A549 (cell line): ENCODE measurements at regions of chr16 and their contacts with region 1.

Region 1: DNA sequence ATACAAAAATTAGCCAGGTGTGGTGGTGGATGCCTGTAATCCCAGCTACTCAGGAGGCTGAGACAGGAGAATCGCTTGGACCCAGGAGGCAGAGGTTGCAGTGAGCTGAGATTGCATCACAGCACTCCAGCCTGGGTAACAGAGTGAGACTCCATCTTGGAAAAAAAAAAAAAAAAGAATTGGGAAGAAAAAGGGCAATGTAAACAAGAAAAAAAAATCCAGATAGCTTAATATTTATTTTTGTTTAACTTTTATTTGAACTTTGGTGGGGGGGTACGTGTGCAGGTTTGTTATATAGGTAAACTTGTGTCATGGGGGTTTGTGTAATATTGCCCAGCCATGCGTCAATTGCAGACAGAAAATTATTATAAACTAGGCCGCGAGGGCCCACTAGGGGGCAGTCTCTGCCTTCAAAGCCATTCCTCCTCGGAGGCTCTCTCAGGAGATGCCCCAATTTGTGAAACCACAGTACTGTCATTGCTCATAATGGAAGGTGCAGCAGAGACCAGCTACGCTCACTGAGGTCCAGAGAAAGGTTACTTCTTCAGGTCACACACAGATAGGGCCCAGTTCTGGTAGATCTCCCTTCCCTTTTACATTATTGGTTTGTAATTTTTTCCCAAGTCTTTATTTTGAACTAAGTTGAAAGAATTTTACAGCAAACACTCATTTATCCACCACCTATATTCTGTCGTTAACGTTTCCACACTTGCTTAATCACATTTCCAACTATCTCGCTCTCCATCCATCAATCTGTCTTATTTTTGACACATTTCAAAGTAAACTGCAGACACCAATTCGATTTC is 206.2 kb downstream of the PRKCB start:
- DNase-seq: peak; percentile 65 to 69
- ATAC-seq: peak; percentile 76 to 89; a peak in 5 of 6 replicates
- H3K4me3 ChIP-seq: no peak overlapping the region
- H3K27ac ChIP-seq: no peak overlapping the region
- H3K4me1 ChIP-seq: no peaks in the 10 kb centered on the region
- CTCF ChIP-seq: peak; percentile 79
- EP300 ChIP-seq: no peak
- POLR2A ChIP-seq: no peak
- RAD21 ChIP-seq: peak; percentile 78 to 89

Region 2: DNA sequence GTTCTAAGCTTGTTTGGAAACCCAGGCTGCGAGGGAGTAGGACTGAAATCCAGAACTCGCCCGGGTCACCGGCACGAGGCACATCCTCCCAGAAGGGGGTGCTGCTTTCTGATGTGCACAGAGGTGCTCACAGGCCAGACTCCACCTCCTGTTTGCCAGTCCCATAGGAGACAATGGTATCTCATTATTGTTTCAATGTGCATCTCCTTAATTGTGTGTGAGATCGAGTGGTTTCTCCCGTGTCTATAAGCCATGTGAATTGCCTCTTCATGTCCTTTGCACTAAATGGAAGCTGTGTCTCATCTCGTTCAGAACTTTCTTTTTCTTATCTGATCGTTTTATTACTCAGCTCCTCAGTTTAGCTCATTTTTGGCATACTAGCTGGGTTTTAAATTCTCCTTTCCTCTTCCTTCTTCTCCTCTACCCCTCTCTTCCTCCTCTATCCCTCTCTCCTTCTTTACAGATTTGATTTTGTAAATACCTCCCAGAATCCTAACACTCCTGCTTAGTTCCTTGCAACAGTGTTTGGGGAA is 238.4 kb before region 1 on chr16:
- CTCF ChIA-PET with region 1: interaction called, 116 read pairs
- POLR2A ChIA-PET with region 1: no interaction called
- DNase-seq: peak; percentile 55 to 60
- ATAC-seq: peak; percentile 91 to 95
- H3K4me3 ChIP-seq: no peak overlapping the region
- H3K27ac ChIP-seq: no peak overlapping the region
- H3K4me1 ChIP-seq: 0 out of 3 replicates have a peak, but pooled peaks cover 5% of the 10 kb centered on the region
- CTCF ChIP-seq: peak; percentile 52
- EP300 ChIP-seq: no peak
- POLR2A ChIP-seq: no peak
- RAD21 ChIP-seq: peak; percentile 55 to 62

Region 3: GRCh38 chr16:24054741-24055491 is 12.9 kb after region 1 on chr16:
- CTCF ChIA-PET with region 1: interaction called, 20 read pairs
- POLR2A ChIA-PET with region 1: no interaction called
- DNase-seq: no peak
- ATAC-seq: no peak
- H3K4me3 ChIP-seq: no peak overlapping the region
- H3K27ac ChIP-seq: no peak overlapping the region
- H3K4me1 ChIP-seq: no peaks in the 10 kb centered on the region
- CTCF ChIP-seq: no peak
- EP300 ChIP-seq: no peak
- POLR2A ChIP-seq: no peak
- RAD21 ChIP-seq: no peak

Region 4: DNA sequence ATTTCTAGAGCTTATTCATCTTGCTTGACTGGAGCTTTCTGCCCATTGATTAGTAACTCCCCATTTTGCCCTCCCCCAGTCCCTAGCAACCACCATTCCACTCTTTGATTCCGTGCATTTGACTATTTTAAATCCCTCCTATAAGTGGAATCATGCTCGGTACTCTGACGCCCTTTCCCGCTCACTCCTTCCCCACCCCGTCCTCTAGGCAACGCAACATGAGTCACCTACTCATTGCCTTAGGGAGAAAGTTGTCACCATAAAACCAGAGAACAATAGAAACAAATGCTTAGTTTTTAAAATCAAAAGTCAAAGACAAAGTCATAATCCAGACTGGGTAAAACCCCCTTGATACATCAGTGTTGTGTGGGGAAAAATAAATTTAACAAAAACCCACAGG is 451.8 kb after region 1 on chr16:
- CTCF ChIA-PET with region 1: interaction called, 279 read pairs
- POLR2A ChIA-PET with region 1: no interaction called
- DNase-seq: peak in 1 of 2 experiments; percentile 18
- ATAC-seq: 0 out of 6 replicates have a peak, but pooled peaks of 1 of the 2 experiments have one; percentile 48
- H3K4me3 ChIP-seq: no peak overlapping the region
- H3K27ac ChIP-seq: no peak overlapping the region
- H3K4me1 ChIP-seq: no peaks in the 10 kb centered on the region
- CTCF ChIP-seq: no peak
- EP300 ChIP-seq: no peak
- POLR2A ChIP-seq: no peak
- RAD21 ChIP-seq: no peak

Region 5: DNA sequence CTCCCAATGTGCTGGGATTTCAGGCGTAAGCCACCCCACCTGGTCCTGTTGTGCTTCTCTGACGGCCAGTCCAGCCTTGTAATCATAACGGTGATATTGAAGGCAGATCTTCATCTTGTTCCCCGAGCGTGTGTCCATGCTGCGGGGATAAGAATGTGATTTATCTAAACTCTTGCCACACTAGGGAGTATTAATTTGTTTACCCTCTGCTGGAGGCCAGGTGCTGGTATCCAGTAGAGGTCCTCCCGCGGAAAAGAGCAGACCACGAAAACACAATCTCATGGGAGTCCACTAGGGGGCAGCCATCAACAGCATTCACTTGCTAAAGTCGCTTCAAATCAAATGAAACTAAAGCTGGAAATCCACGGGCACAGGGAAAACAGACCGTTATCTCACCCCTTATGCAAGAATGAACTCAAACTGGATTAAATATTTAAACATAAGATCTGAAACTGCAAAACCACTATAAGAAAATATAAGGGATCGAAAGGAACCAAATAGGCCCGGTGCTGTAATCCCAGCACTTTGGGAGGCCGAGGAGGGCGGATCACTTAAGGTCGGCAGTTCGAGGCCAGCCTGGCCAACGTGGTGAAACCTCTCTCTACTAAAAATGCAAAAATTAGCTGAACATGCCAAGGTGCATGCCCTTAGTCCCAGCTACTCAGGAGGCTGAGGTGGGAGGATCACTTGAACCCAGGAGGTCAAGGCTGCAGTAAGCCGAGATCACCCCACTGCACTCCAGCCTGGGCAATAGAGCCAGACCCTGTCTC is 475.1 kb after region 1 on chr16:
- CTCF ChIA-PET with region 1: interaction called, 11 read pairs
- POLR2A ChIA-PET with region 1: no interaction called
- DNase-seq: peak; percentile 74 to 91
- ATAC-seq: peak; percentile 91 to 94
- H3K4me3 ChIP-seq: peak overlapping the region; percentile 31
- H3K27ac ChIP-seq: peak overlapping the region in 1 of 2 experiments; percentile 74; a peak in 3 of 6 replicates
- H3K4me1 ChIP-seq: no peaks in the 10 kb centered on the region
- CTCF ChIP-seq: peak; percentile 94
- EP300 ChIP-seq: no peak
- POLR2A ChIP-seq: no peak
- RAD21 ChIP-seq: peak; percentile 86 to 90